AG04450 (cell line): ENCODE measurements at regions of chr5 and their contacts with region 1.

Region 1: GRCh38 chr5:43729846-43730478 is 127.0 kb downstream of the NNT start:
- DNase-seq: peak; percentile 3
- H3K4me3 ChIP-seq: no peak overlapping the region
- H3K27ac ChIP-seq: no peak overlapping the region
- H3K27me3 ChIP-seq: no peaks in the 10 kb centered on the region
- CTCF ChIP-seq: peak; percentile 58

Region 2: DNA sequence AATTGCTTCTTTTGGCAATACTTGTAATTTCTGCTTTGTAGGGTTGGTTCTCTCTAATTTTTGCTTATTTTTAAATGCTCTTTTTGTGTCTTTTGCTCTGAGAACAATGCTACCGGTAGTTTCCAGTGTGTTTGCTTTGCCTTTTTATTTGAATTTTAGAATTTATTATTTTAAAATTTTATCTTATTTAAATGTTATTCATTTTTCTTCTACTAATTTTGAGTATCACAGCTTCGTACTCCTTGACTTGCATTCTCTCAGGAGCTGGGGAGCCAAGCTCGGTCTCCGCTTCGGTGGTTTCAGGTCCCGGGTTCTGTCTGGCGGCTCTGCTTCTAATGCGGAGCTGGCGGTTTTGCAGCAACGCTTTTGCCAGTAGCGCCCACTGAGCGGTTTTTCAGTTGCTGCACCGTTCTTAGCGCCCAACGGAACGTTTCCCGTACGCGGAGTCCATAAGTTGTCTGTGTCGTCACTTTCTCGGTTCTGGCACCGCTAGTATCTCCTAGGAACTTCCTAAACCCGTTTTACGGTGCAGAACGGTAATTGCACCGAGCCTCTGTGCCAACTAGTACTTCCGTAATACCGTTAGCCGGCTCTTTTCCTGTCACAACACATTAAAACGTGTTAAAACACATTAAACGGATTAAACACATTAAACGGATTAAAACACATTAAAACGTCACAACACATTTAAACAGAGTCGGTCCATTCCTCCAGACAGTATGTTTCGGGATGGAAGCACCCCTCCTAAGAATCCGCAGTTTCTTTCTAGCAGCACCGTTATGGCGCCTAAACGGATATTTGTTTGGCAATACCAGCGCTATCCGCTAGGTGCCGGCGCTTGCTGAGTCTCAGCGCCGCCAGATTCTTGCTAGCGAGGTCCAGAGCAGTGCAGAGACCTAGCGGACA is 735.5 kb before region 1 on chr5:
- CTCF ChIA-PET with region 1: no interaction called
- POLR2A ChIA-PET with region 1: no interaction called
- DNase-seq: peak; percentile 81
- H3K4me3 ChIP-seq: peak overlapping the region; percentile 66
- H3K27ac ChIP-seq: peak overlapping the region; percentile 97
- H3K27me3 ChIP-seq: no peaks in the 10 kb centered on the region
- CTCF ChIP-seq: peak; percentile 94

Region 3: DNA sequence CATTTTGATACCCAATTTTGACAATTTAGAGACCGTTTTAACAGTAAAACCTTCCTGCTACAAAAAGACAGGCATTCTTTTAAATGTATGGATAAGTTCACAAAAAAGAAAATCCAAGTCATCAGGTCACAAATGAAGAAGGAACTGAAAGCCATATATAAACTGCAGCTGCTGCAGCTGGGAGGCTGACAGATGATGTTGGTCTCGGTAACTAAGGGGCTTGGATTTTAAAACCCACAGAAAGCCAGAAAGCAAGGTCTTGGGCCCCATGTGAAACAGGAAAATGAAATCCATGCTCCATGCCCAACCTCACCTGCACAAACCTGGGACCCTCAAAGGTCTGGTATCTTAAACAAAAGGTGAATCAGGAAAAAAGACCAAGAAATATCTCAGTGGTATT is 199.3 kb before region 1 on chr5:
- CTCF ChIA-PET with region 1: no interaction called
- POLR2A ChIA-PET with region 1: no interaction called
- DNase-seq: no peak
- H3K4me3 ChIP-seq: no peak overlapping the region
- H3K27ac ChIP-seq: no peak overlapping the region
- H3K27me3 ChIP-seq: no peaks in the 10 kb centered on the region
- CTCF ChIP-seq: no peak

Region 4: GRCh38 chr5:44774279-44774880 is 1044.4 kb after region 1 on chr5:
- CTCF ChIA-PET with region 1: interaction called, 10 read pairs
- POLR2A ChIA-PET with region 1: no interaction called
- DNase-seq: peak; percentile 6
- H3K4me3 ChIP-seq: no peak overlapping the region
- H3K27ac ChIP-seq: no peak overlapping the region
- H3K27me3 ChIP-seq: no peaks in the 10 kb centered on the region
- CTCF ChIP-seq: peak; percentile 52